ENCODE measurements at regions of chr10 and their contacts with region 1.

Region 1: GRCh38 chr10:72016608-72017312 is 52.6 kb downstream of the CHST3 start:
- DNase-seq: peak; percentile 69
- ATAC-seq: peak; percentile 69

Region 2: GRCh38 chr10:71985542-71986250 is 31.1 kb before region 1 on chr10:
- intact Hi-C with region 1: loop called (anchors 2 kb)
- DNase-seq: peak; percentile 86
- ATAC-seq: peak; percentile 69